ENCODE measurements at regions of chr17 and their contacts with region 1.

Region 1: GRCh38 chr17:72985881-72986720 is 106.4 kb downstream of the SLC39A11 start:
- DNase-seq: peak; percentile 85
- H3K4me3 ChIP-seq: no peak overlapping the region; a peak in 1 of 4 replicates
- H3K27ac ChIP-seq: no peak overlapping the region
- H3K4me1 ChIP-seq: peaks cover 5 to 12% of the 10 kb centered on the region in 2 experiments; a peak in 2 of 4 replicates
- H3K27me3 ChIP-seq: no peaks in the 10 kb centered on the region
- CTCF ChIP-seq: peak; percentile 97
- EP300 ChIP-seq: no peak
- RAD21 ChIP-seq: peak; percentile 96

Region 2: GRCh38 chr17:72952220-72952984 is 33.7 kb before region 1 on chr17:
- CTCF ChIA-PET with region 1: interaction called, 15 read pairs
- POLR2A ChIA-PET with region 1: no interaction called
- DNase-seq: no peak
- H3K4me3 ChIP-seq: no peak overlapping the region
- H3K27ac ChIP-seq: no peak overlapping the region
- H3K4me1 ChIP-seq: peaks cover 13 to 18% of the 10 kb centered on the region in 2 experiments; a peak in 3 of 4 replicates
- H3K27me3 ChIP-seq: no peaks in the 10 kb centered on the region
- CTCF ChIP-seq: no peak
- EP300 ChIP-seq: no peak
- RAD21 ChIP-seq: no peak

Region 3: DNA sequence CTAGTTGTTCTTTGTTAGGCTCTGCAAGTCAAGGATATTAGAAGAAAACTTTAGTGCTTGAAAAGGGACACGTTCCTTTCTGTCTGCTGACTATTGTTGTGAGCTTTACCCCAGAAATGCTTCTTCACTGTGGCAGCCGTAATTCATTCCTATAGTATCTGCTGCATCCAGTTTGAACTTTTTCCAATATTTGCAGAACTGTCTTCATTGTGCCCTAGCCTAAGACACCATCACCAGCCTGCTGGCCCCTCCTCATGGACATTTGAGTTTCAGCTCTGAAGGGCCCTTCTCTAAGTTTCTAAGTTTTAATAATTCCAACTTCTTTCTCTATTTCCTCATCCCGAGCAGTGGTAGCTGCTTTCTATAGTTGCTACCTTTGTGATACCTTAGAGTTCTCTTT is 14.7 kb after region 1 on chr17:
- CTCF ChIA-PET with region 1: interaction called, 21 read pairs
- POLR2A ChIA-PET with region 1: no interaction called
- DNase-seq: no peak
- H3K4me3 ChIP-seq: no peak overlapping the region
- H3K27ac ChIP-seq: no peak overlapping the region
- H3K4me1 ChIP-seq: peaks cover 7 to 12% of the 10 kb centered on the region in 2 experiments; a peak in 3 of 4 replicates
- H3K27me3 ChIP-seq: no peaks in the 10 kb centered on the region
- CTCF ChIP-seq: no peak
- EP300 ChIP-seq: no peak
- RAD21 ChIP-seq: no peak

Region 4: DNA sequence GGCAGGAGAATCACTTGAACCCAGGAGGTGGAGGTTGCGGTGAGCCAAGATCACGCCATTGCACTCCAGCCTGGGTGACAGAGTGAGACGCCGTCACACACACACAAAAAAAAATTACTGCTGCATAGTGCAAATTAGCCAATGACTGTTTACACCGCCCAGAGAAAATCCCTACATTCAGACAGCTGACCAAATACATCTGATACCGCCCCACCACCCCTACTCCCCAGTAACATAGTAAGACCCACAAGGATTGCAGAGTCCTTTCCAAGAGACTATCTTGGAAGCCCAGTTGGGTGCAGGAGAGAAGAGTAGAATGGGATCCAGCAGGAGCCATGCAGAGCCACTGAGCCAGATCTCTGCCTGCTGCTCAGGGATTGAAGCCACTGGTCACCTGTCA is 42.9 kb after region 1 on chr17:
- CTCF ChIA-PET with region 1: no interaction called
- POLR2A ChIA-PET with region 1: no interaction called
- DNase-seq: no peak
- H3K4me3 ChIP-seq: no peak overlapping the region
- H3K27ac ChIP-seq: no peak overlapping the region
- H3K4me1 ChIP-seq: peaks cover 5 to 15% of the 10 kb centered on the region in 2 experiments; a peak in 1 of 4 replicates
- H3K27me3 ChIP-seq: no peaks in the 10 kb centered on the region
- CTCF ChIP-seq: no peak
- EP300 ChIP-seq: no peak
- RAD21 ChIP-seq: no peak

Region 5: GRCh38 chr17:73132085-73132492 is 146.0 kb after region 1 on chr17:
- CTCF ChIA-PET with region 1: interaction called, 11 read pairs
- POLR2A ChIA-PET with region 1: no interaction called
- DNase-seq: no peak
- H3K4me3 ChIP-seq: no peak overlapping the region
- H3K27ac ChIP-seq: no peak overlapping the region
- H3K4me1 ChIP-seq: no peaks in the 10 kb centered on the region; a peak in 1 of 4 replicates
- H3K27me3 ChIP-seq: no peaks in the 10 kb centered on the region
- CTCF ChIP-seq: no peak
- EP300 ChIP-seq: no peak
- RAD21 ChIP-seq: no peak

Region 6: DNA sequence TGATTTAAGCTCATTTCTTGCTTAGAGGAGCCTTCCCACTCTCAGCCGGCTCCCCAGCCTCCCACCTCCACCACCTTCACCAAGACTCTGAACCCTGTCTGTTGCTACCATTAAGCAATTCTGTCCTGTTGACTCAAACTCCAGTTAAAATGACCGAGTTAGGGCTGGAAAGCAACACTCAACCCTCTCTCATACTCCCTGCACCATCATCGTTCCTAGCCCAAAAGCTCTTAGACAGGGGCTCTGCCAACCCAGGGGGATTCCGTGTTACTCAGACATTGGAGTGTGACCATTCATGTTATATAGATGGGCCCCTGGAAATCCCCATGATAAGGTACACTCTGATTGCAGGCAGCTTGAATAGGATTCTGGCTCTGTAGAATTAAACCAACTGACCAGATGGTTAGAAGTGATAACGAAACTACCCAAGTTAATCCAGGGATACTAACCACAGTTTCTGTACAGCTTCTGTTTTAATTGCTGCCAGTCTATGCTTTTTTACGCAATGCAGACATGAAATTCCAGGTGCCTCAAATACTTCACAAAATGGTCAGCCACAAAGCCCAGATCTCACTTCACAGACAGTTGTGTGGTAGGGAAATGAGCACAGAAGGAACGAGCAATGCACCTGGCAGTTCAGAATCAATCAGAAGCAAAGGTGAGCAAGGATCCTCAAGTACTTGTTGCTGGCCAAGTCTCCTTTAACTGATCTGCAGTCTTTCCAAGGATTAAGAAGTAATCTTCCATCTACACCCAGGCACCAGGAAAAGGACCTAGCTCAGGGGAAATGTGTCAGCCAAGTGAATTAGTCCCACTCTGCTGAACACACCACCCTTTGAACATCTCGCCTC is 180.9 kb after region 1 on chr17:
- CTCF ChIA-PET with region 1: interaction called, 32 read pairs
- POLR2A ChIA-PET with region 1: no interaction called
- DNase-seq: no peak
- H3K4me3 ChIP-seq: 0 out of 4 replicates have a peak overlapping the region, but pooled peaks of 1 of the 2 experiments have one; percentile 45
- H3K27ac ChIP-seq: no peak overlapping the region
- H3K4me1 ChIP-seq: peaks cover 0 to 22% of the 10 kb centered on the region in 2 experiments; a peak in 1 of 4 replicates
- H3K27me3 ChIP-seq: peaks cover 34% of the 10 kb centered on the region
- CTCF ChIP-seq: no peak
- EP300 ChIP-seq: no peak
- RAD21 ChIP-seq: no peak

Measured in SK-N-SH (cell line).